AG04449 (cell line): ENCODE measurements at regions of chr3 and their contacts with region 1.

Region 1: GRCh38 chr3:158727206-158728060 is 4.8 kb downstream of the RARRES1 start:
- DNase-seq: no peak
- H3K4me3 ChIP-seq: no peak overlapping the region
- CTCF ChIP-seq: peak; percentile 56

Region 2: DNA sequence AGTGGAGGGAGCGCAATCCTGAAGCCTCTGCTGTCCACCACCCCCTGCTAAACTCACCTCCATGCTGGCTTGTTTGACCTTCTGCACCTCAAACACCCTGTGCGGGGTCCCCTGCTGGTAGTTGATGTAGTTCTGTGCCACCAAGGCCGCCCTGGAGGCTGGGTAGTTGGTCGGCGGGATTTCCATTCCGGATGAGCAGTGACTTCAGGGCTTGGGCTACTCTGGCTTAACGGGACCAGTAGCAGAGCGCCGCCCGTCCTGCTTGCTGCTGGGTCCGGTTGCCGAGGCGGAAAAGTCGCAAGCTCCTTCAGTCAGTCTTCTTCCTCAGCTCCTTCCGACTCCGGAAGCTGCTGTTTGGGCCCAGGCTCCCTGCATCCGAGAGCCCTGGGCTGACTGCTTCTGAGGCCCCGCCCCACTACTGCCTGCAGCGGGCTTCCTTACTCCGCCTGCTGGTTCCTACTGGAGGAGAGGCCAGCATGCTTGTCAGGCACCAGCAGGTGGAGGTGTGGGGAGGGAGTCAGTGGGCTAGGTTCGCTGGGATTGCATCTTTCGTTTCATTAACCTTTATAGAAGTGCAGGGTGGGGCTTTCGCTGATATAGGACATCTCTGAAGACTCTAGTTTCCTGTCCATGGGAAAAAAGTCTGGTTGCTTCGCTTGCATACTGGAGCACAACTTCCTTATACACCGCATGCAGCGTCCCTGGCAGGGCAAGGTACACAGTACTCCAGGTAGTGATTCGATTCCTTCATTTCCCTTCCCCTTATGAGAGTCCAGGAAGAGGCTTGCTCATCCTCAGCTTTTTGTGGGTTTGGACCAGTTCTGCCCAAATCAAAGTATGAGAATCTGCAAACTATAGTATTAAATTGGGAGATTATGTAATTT is 54.9 kb before region 1 on chr3 and contains the start of gene LXN:
- CTCF ChIA-PET with region 1: interaction called, 15 read pairs
- POLR2A ChIA-PET with region 1: no interaction called
- DNase-seq: peak; percentile 33
- H3K4me3 ChIP-seq: peak within 1 kb of the TSS; percentile 71
- CTCF ChIP-seq: peak; percentile 96

Region 3: GRCh38 chr3:158702815-158703481 is 24.5 kb before region 1 on chr3:
- CTCF ChIA-PET with region 1: interaction called, 54 read pairs
- POLR2A ChIA-PET with region 1: interaction called, 3 read pairs
- DNase-seq: no peak
- H3K4me3 ChIP-seq: no peak overlapping the region
- CTCF ChIP-seq: no peak

Region 4: GRCh38 chr3:158742871-158743663 is 15.6 kb after region 1 on chr3:
- CTCF ChIA-PET with region 1: interaction called, 93 read pairs
- POLR2A ChIA-PET with region 1: no interaction called
- DNase-seq: no peak
- H3K4me3 ChIP-seq: no peak overlapping the region
- CTCF ChIP-seq: no peak

Region 5: GRCh38 chr3:158775426-158776410 is 48.3 kb after region 1 on chr3:
- CTCF ChIA-PET with region 1: interaction called, 26 read pairs
- POLR2A ChIA-PET with region 1: no interaction called
- DNase-seq: no peak
- H3K4me3 ChIP-seq: no peak overlapping the region
- CTCF ChIP-seq: no peak

Region 6: DNA sequence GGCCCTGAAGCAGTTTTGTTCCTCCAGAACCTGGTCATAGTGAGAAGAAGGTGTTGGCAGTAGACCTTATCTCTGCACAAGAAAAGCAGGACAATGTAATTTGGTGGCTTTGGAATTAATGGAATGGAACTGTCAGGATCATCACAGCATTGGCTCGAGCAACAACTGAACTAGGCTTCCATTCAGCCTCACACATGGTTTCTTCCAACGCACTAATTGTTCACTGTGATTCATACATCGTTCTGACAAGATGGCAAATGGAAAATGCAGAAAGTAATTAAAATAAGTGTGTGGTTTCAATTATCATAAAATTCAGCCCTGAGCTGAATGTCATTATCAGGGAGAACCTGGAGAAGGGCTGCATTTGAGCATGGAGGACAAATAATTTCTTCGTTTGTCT is 155.0 kb after region 1 on chr3:
- CTCF ChIA-PET with region 1: no interaction called
- POLR2A ChIA-PET with region 1: no interaction called
- DNase-seq: no peak
- H3K4me3 ChIP-seq: no peak overlapping the region
- CTCF ChIP-seq: no peak